ENCODE measurements at regions of chr19 and their contacts with region 1.

Region 1: GRCh38 chr19:8389891-8390616 is at the start of gene RAB11B:
- DNase-seq: peak; percentile 94 to 100 (median 98)
- ATAC-seq: peak; percentile 87
- H3K4me3 ChIP-seq: peak within 1 kb of the TSS; percentile 62 to 89
- H3K4me3 Mint-ChIP-seq: peak within 1 kb of the TSS; percentile 96
- H3K27ac ChIP-seq: peak within 1 kb of the TSS; percentile 85 to 86
- H3K27ac Mint-ChIP-seq: peak within 1 kb of the TSS; percentile 95
- H3K4me1 ChIP-seq: peaks cover 17% of the 10 kb centered on the region
- H3K4me1 Mint-ChIP-seq: peaks cover 36% of the 10 kb centered on the region
- H3K27me3 ChIP-seq: no peaks in the 10 kb centered on the region
- H3K27me3 Mint-ChIP-seq: no peaks in the 10 kb centered on the region
- CTCF ChIP-seq: no peak
- total RNA-seq, gene RAB11B: 60.2 to 61.4 TPM

Region 2: GRCh38 chr19:7919610-7920518 is 470.2 kb before region 1 on chr19 and contains the start of gene SNAPC2:
- CTCF ChIA-PET with region 1: no interaction called
- POLR2A ChIA-PET with region 1: no interaction called
- intact Hi-C with region 1: loop called in 1 of 2 experiments (anchors 1 kb)
- DNase-seq: peak; percentile 93 to 98 (median 96)
- ATAC-seq: peak; percentile 63
- H3K4me3 ChIP-seq: peak within 1 kb of the TSS; percentile 51 to 87
- H3K4me3 Mint-ChIP-seq: peak within 1 kb of the TSS; percentile 88
- H3K27ac ChIP-seq: peak within 1 kb of the TSS; percentile 55 to 65
- H3K27ac Mint-ChIP-seq: peak within 1 kb of the TSS; percentile 90
- H3K4me1 ChIP-seq: peaks cover 42% of the 10 kb centered on the region
- H3K4me1 Mint-ChIP-seq: peaks cover 48% of the 10 kb centered on the region
- H3K27me3 ChIP-seq: peaks cover 21 to 27% of the 10 kb centered on the region in 2 experiments
- H3K27me3 Mint-ChIP-seq: peaks cover 25% of the 10 kb centered on the region
- CTCF ChIP-seq: no peak
- total RNA-seq, gene SNAPC2: 15.4 to 17.0 TPM

Region 3: DNA sequence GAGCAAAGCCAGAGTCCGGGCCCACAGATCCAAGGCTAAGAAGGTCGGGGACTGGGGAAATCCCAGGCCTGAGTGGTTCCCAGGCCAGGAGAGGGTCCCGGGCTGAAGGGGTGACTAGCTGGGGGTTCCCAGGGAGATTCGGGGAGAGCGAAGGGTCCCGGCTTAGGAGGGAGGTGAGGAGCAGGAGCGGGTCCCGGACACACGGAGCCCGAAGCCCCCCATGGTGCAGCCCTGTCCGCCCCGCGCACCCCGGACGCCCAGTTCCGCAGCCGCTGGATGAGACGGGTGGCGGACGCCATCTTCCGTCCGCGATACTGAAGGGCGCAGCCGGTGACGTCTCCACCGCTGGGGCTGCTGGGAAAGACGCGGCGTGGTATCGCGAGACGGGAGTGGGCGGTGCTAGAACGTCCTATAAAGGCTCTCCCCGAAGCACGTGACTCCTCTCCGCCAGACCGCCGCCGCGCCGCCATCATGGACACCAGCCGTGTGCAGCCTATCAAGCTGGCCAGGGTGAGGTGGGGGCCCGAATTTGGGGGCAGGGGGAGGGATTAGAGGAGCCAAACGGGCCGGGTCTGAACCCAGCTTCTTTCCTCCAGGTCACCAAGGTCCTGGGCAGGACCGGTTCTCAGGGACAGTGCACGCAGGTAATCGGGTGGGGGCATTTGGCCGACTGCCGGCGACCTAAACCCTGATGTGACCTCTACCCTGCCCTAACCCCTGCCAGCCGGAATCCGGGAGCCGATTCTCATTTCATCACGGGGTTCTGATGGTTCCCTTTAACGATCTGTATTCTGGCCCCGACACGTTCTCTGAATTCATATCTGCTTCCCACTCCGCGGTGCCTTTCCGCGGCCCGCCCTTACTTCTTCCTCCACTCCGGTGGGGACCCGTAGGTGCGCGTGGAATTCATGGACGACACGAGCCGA is 68.7 kb before region 1 on chr19 and contains the starts of genes NDUFA7 and RPS28:
- CTCF ChIA-PET with region 1: no interaction called
- POLR2A ChIA-PET with region 1: no interaction called
- intact Hi-C with region 1: loop called (anchors 1 kb)
- DNase-seq: peak; percentile 94 to 99 (median 97)
- ATAC-seq: peak; percentile 93
- H3K4me3 ChIP-seq: peak within 1 kb of the TSS; percentile 81 to 98
- H3K4me3 Mint-ChIP-seq: peak within 1 kb of the TSS; percentile 96
- H3K27ac ChIP-seq: peak within 1 kb of the TSS; percentile 90 to 96
- H3K27ac Mint-ChIP-seq: peak within 1 kb of the TSS; percentile 97
- H3K4me1 ChIP-seq: peaks cover 26% of the 10 kb centered on the region
- H3K4me1 Mint-ChIP-seq: peaks cover 37% of the 10 kb centered on the region
- H3K27me3 ChIP-seq: no peaks in the 10 kb centered on the region
- H3K27me3 Mint-ChIP-seq: no peaks in the 10 kb centered on the region
- CTCF ChIP-seq: no peak
- total RNA-seq, gene NDUFA7: 19.8 to 28.9 TPM
- total RNA-seq, gene RPS28: 3,224 to 3,257 TPM

Region 4: DNA sequence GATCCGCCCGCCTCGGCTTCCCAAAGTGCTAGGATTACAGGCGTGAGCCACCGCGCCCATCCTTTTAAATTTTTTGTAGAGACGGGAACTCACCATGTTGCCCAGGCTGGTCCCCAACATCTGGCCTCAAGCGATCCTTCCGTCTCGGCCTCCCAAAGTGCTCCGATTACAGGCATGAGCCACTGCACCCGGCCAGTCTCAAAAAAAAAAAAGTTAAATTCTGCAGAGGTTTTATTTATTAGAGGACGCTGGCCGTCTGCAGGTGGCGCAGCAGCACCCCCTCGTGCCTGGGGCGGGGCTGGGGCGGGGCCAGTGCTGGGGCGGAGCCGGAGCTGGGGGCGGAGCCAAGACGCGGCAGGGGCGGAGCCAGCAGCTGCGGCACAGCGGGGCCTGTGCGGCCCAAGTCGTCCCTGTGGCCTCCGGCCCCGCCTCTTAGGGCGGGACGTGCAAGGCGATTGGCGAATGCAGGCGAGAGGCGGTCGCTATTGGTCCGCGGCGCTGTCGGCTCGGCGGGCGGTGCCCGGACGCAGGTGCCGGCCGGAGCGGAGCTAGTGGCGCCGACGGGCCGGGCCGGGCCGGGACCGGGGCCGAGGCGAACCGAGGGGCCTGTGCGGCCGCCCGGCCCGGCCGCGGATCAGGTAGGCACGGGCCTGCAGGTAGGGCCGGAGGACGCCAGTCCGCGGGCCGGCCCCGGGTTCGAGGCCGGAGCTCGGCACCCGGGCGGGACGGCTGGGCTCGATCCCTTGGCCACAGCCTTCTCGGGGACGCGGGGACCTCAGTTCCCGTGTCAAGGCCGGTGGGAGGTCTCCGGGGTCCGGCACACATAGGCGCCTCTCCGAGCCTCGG is 23.0 kb after region 1 on chr19 and contains the start of gene MARCHF2:
- CTCF ChIA-PET with region 1: interaction called, 3 read pairs
- POLR2A ChIA-PET with region 1: interaction called, 3 read pairs
- intact Hi-C with region 1: loop called (anchors 1 kb)
- DNase-seq: peak; percentile 92 to 99 (median 96)
- ATAC-seq: peak; percentile 100
- H3K4me3 ChIP-seq: peak within 1 kb of the TSS; percentile 66 to 82
- H3K4me3 Mint-ChIP-seq: peak within 1 kb of the TSS; percentile 72
- H3K27ac ChIP-seq: no peak within 1 kb of the TSS
- H3K27ac Mint-ChIP-seq: no peak within 1 kb of the TSS
- H3K4me1 ChIP-seq: peaks cover 7% of the 10 kb centered on the region
- H3K4me1 Mint-ChIP-seq: peaks cover 8% of the 10 kb centered on the region
- H3K27me3 ChIP-seq: no peaks in the 10 kb centered on the region
- H3K27me3 Mint-ChIP-seq: no peaks in the 10 kb centered on the region
- CTCF ChIP-seq: peak; percentile 65
- total RNA-seq, gene MARCHF2: 14.5 to 17.5 TPM

Region 5: DNA sequence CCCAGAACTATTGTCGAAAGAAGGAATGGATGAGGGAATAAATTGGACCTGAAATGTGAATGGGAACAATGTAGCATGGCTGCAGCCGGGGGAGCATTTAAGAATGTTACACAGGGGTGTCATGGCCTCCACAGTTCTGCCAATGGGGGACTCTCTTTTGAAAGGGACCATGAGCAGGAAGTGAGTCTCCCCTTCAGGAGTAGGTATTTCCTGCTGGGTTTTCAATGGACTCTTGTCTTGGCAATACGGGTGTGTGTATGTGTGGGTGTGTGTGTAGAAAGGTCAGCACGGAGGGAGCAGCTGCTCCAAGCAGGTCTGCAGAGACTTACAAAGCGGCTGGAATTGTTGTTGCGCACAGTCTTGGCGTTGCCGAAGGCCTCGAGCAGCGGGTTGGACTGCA is 162.8 kb after region 1 on chr19:
- CTCF ChIA-PET with region 1: no interaction called
- POLR2A ChIA-PET with region 1: no interaction called
- intact Hi-C with region 1: no loop called
- DNase-seq: no peak
- ATAC-seq: no peak
- H3K4me3 ChIP-seq: no peak overlapping the region
- H3K4me3 Mint-ChIP-seq: no peak overlapping the region
- H3K27ac ChIP-seq: no peak overlapping the region
- H3K27ac Mint-ChIP-seq: no peak overlapping the region
- H3K4me1 ChIP-seq: peaks cover 4% of the 10 kb centered on the region
- H3K4me1 Mint-ChIP-seq: peaks cover 11% of the 10 kb centered on the region
- H3K27me3 ChIP-seq: no peaks in the 10 kb centered on the region
- H3K27me3 Mint-ChIP-seq: no peaks in the 10 kb centered on the region
- CTCF ChIP-seq: no peak

Region 6: DNA sequence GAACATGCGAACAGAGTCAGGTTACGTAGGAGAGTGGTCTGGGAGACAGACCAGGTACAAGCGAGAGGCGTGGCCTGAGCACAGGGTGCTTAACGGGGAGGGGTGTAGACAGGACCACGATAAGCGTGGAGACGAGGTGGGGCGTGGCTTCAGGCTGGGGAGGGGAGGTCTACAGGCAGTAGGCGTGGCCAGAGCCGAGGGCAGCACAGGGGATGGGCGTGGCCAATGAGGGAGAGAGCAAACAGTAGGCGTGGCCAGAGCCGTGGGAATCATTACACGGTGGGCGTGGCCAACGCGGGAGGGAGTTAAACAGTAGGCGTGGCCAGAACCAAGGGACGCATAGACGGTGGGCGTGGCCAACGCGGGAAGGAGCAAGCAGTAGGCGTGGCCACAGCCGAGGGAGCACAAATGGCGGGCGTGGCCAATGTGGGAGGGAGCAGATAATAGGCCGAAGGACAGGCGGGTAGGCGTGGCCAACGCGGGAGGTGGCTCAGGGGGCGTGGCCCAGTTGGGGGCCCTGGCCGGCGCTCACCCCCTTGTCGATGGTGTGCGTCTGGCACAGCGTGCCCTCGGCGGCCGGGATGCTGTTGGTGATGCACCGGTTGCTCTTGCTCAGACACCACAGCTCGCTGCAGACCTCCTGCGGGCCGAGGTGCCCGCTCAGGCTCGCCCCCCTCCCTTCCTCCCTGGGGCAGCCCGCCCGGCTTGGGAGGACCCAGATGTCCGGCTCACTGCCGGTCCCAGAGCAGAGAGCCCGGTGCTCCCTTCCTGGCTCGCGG is 202.4 kb after region 1 on chr19:
- CTCF ChIA-PET with region 1: no interaction called
- POLR2A ChIA-PET with region 1: no interaction called
- intact Hi-C with region 1: loop called (anchors 1 kb)
- DNase-seq: peak; percentile 91 to 98 (median 95)
- ATAC-seq: peak; percentile 86
- H3K4me3 ChIP-seq: peak overlapping the region; percentile 47 to 50
- H3K4me3 Mint-ChIP-seq: peak overlapping the region; percentile 84
- H3K27ac ChIP-seq: peak overlapping the region in 1 of 2 experiments; percentile 32
- H3K27ac Mint-ChIP-seq: peak overlapping the region; percentile 84
- H3K4me1 ChIP-seq: peaks cover 21% of the 10 kb centered on the region
- H3K4me1 Mint-ChIP-seq: peaks cover 36% of the 10 kb centered on the region
- H3K27me3 ChIP-seq: no peaks in the 10 kb centered on the region
- H3K27me3 Mint-ChIP-seq: no peaks in the 10 kb centered on the region
- CTCF ChIP-seq: no peak

Measured in CD8-positive, alpha-beta T cell (primary cell).